HCT116 (cell line): ENCODE measurements at regions of chr11 and their contacts with region 1.

Region 1: GRCh38 chr11:76207642-76208401 is 1.5 kb upstream of the WNT11 start:
- DNase-seq: peak; percentile 51
- ATAC-seq: peak; percentile 79
- H3K4me3 ChIP-seq: peak overlapping the region; percentile 12 to 41
- H3K27ac ChIP-seq: no peak overlapping the region
- H3K4me1 ChIP-seq: peaks cover 8 to 42% of the 10 kb centered on the region in 2 experiments
- H3K27me3 ChIP-seq: peaks cover 13% of the 10 kb centered on the region; the same call in 1 of the 2 replicates
- CTCF ChIP-seq: peak; percentile 84 to 95 (median 91)
- POLR2A ChIP-seq: no peak
- RAD21 ChIP-seq: peak; percentile 95

Region 2: DNA sequence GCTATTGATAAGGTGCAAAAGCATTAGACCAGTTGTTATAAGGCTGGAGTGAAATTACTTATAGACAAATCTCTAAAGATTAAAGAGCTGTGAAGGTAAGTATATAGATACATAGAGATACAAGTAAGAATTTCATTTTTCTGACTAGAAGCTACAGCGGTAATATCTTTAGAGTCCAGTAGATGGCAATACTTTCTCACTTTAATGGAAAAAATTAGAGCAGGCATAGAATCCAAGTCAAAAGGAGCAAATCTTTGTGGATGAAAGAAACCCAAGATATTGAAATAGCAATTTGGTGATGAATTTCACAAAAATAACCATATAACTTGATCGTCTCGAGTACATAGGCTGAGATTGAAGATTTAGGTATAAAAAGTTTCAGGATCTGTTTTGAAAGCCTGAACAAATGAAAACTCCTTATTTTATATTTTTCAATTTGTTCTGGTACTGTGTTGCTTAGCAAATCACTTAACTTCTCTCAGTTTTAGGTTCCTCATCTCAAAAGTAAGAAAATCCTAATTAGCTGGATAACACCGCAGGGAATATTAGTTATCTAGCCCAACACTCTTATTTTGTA is 310.9 kb before region 1 on chr11:
- CTCF ChIA-PET with region 1: interaction called, 19 read pairs
- POLR2A ChIA-PET with region 1: no interaction called
- RAD21 ChIA-PET with region 1: interaction called in 1 of 2 experiments, 4 read pairs
- intact Hi-C with region 1: loop called (anchors 2 kb)
- DNase-seq: peak; percentile 12
- ATAC-seq: peak; percentile 52; the same call in 1 of the 2 replicates
- H3K4me3 ChIP-seq: no peak overlapping the region
- H3K27ac ChIP-seq: no peak overlapping the region
- H3K4me1 ChIP-seq: no peaks in the 10 kb centered on the region
- H3K27me3 ChIP-seq: no peaks in the 10 kb centered on the region
- CTCF ChIP-seq: peak; percentile 32 to 71 (median 69); a peak in 5 of 6 replicates
- POLR2A ChIP-seq: no peak
- RAD21 ChIP-seq: peak; percentile 82

Region 3: DNA sequence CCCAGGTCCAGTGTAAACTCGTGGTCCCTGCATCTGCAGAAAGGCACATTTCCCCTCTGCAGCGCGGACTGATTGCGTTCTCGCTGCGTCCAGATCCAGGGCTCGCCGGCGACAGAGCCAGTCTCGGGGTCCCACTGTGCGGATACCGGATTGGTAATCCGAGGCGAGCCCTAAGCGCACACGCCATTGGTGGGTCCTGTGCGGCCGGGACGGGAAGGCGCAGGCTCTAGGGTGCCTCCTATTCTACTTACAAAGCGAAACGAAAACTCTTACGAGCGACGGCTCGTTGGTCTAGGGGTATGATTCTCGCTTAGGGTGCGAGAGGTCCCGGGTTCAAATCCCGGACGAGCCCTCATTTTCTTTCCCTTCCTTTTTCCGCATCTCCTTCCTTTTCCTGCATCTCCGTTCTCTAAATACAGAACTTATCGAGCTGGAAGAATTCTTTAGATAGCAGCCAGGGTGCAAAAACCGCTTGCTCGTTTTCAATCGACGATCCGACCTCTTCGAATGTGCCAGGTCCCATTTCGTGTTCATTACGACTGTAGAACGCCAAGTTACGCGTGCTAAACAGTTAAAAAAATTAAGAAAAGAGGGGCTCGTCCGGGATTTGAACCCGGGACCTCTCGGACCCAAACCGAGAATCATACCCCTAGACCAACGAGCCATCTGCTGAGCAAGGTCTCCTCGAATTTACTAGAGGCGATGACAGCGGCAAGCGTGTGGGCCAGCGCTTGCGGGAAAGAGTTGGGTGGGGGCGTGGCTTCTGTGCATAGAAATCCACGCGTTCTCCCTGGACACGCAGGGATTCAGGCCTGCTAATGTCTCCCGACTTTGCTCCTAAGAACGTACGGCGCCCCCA is 27.6 kb after region 1 on chr11:
- CTCF ChIA-PET with region 1: interaction called, 4 read pairs
- POLR2A ChIA-PET with region 1: no interaction called
- RAD21 ChIA-PET with region 1: no interaction called
- intact Hi-C with region 1: loop called (anchors 1 kb)
- DNase-seq: peak; percentile 79
- ATAC-seq: peak; percentile 73
- H3K4me3 ChIP-seq: peak overlapping the region; percentile 50 to 72
- H3K27ac ChIP-seq: peak overlapping the region; percentile 58
- H3K4me1 ChIP-seq: peaks cover 22 to 55% of the 10 kb centered on the region in 2 experiments; a peak in 3 of 4 replicates
- H3K27me3 ChIP-seq: no peaks in the 10 kb centered on the region
- CTCF ChIP-seq: no peak
- POLR2A ChIP-seq: no peak
- RAD21 ChIP-seq: no peak